Naive thymus-derived CD4-positive, alpha-beta T cell (primary cell): ENCODE measurements at regions of chr14 and their contacts with region 1.

Region 1: GRCh38 chr14:34826661-34827060 is 48.5 kb downstream of the BAZ1A start:
- DNase-seq: no peak
- ATAC-seq: no peak
- H3K4me3 ChIP-seq: no peak overlapping the region
- H3K4me3 Mint-ChIP-seq: no peak overlapping the region
- H3K27ac ChIP-seq: no peak overlapping the region
- H3K27ac Mint-ChIP-seq: peak overlapping the region in 8 of 9 donors; percentile 14 to 65 (median 37)
- H3K4me1 ChIP-seq: peaks cover 0 to 6% of the 10 kb centered on the region in 2 donors
- H3K4me1 Mint-ChIP-seq: peaks cover 20 to 47% (median 31%) of the 10 kb centered on the region in 7 donors
- H3K27me3 ChIP-seq: no peaks in the 10 kb centered on the region
- H3K27me3 Mint-ChIP-seq: no peaks in the 10 kb centered on the region

Region 2: GRCh38 chr14:35079742-35080141 is 253.1 kb after region 1 on chr14:
- CTCF ChIA-PET with region 1: interaction called, 11 read pairs
- POLR2A ChIA-PET with region 1: no interaction called
- intact Hi-C with region 1: no loop called
- DNase-seq: no peak
- ATAC-seq: no peak
- H3K4me3 ChIP-seq: no peak overlapping the region
- H3K4me3 Mint-ChIP-seq: no peak overlapping the region
- H3K27ac ChIP-seq: no peak overlapping the region
- H3K27ac Mint-ChIP-seq: no peak overlapping the region
- H3K4me1 ChIP-seq: no peaks in the 10 kb centered on the region
- H3K4me1 Mint-ChIP-seq: no peaks in the 10 kb centered on the region
- H3K27me3 ChIP-seq: no peaks in the 10 kb centered on the region
- H3K27me3 Mint-ChIP-seq: no peaks in the 10 kb centered on the region